ENCODE measurements at regions of chr15 and their contacts with region 1.

Region 1: DNA sequence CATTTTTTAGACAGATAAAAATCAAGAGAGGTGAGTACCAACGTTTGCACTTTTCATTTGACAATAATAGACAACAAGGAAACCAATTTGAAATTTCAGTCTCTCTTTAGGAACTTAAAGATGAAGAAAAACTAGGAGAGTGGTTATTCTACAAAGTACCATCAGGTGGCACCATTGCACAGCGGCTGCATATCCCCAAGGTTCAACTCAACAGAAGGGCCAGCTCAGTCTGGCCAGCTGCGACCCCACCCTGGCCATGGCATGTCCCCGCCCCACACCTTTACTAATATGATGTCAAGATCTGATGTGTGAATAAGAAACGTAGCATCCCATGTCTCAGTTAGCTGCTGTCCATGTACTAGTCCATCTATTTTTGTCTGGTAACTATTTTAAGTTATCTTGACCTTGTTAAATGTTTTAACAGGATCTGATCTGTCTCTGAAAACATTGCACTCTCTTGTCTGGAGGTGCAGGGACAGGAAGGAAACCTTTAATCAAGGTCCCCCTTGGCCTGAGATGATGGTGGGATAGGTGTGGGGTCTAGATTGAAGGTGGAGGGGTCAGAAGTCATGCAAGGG is 35.5 kb upstream of the CGNL1 start:
- DNase-seq: peak; percentile 18 to 50 (median 46)
- H3K4me3 ChIP-seq: no peak overlapping the region
- H3K4me3 Mint-ChIP-seq: no peak overlapping the region
- H3K27ac ChIP-seq: no peak overlapping the region
- H3K27ac Mint-ChIP-seq: no peak overlapping the region
- H3K4me1 ChIP-seq: no peaks in the 10 kb centered on the region
- H3K4me1 Mint-ChIP-seq: peaks cover 8% of the 10 kb centered on the region
- H3K27me3 ChIP-seq: no peaks in the 10 kb centered on the region
- H3K27me3 Mint-ChIP-seq: peaks cover 0 to 2% (median 0%) of the 10 kb centered on the region in 3 donors
- CTCF ChIP-seq: peak; percentile 86

Region 2: DNA sequence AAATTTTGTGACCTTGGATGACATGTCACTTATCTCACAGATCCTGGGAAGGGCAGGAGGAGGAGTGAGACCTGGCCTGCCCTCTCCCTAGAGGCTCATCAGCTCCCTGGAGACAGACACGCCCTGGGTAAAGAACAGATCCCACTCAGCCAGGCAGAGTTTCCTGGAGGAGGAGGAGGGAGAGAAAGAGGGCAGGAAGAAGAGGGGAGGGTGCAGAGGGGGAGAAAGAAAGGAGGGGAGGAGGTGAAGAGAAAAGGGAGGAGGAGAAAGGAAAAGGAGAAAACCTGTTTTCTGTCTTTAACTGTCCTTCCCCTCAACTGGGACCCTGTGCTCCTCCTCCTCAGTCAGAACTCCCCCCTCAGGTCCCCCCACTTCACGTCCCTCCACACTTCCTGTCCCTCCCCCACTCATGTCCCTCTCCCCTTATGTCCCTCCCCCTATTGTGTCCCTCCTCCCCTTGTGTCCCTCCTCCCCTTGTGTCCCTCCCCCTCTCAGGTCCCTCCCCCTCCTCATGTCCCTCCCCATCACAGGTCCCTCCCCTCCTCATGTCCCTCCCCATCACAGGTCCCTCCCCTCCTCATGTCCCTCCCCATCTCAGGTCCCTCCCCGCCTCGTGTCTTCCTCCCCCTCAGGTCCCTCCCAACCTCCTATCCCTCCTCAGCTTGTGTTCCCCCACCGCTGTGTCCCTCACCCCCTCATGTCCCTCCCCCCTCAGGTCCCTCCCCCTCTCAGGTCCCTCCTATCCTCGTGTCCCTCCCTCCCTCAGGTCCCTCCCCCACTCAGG is 16.8 kb before region 1 on chr15:
- intact Hi-C with region 1: no loop called
- DNase-seq: no peak
- H3K4me3 ChIP-seq: no peak overlapping the region
- H3K4me3 Mint-ChIP-seq: no peak overlapping the region
- H3K27ac ChIP-seq: no peak overlapping the region
- H3K27ac Mint-ChIP-seq: peak overlapping the region in 1 of 7 donors; percentile 62
- H3K4me1 ChIP-seq: peaks cover 6 to 11% of the 10 kb centered on the region in 2 donors
- H3K4me1 Mint-ChIP-seq: peaks cover 11% of the 10 kb centered on the region
- H3K27me3 ChIP-seq: no peaks in the 10 kb centered on the region
- H3K27me3 Mint-ChIP-seq: peaks cover 3 to 9% (median 8%) of the 10 kb centered on the region in 3 donors
- CTCF ChIP-seq: no peak

Region 3: DNA sequence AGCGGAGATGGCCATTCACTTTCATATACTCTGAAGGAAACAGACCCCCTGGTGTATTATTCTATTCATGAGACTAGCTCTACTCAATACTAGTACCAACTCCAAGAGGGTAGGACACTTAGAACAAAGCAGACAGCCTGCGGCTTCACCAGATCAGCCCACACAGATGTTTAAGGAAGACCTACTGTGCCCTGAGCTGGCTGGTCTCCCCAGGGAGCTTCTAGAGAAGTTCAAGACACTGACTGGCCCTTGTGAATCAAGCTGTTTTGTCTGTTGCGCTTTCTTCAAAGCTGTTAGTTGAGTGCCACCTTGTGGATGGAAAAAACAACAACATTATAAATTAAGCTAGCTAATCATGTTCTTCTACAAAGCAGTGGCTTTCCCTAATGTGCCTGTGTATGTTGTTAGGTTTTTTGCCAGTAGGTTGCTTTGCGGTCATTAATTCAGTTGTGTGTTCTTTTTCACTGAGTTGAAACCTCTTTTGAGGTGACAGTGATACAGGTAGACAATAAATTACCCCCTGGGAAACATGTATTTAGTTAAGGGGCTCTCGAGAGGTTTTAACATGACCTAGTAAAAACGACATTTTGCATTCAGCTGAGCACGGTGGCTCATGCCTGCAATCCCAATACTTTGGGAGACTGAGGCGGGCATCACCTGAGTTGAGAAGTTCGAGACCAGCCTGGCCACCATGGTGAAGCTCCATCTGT is 186.8 kb after region 1 on chr15:
- intact Hi-C with region 1: loop called (anchors 1 to 5 kb)
- DNase-seq: peak; percentile 13 to 40 (median 16)
- H3K4me3 ChIP-seq: no peak overlapping the region
- H3K4me3 Mint-ChIP-seq: no peak overlapping the region
- H3K27ac ChIP-seq: no peak overlapping the region
- H3K27ac Mint-ChIP-seq: no peak overlapping the region
- H3K4me1 ChIP-seq: no peaks in the 10 kb centered on the region
- H3K4me1 Mint-ChIP-seq: no peaks in the 10 kb centered on the region
- H3K27me3 ChIP-seq: no peaks in the 10 kb centered on the region
- H3K27me3 Mint-ChIP-seq: no peaks in the 10 kb centered on the region
- CTCF ChIP-seq: peak; percentile 64

Region 4: DNA sequence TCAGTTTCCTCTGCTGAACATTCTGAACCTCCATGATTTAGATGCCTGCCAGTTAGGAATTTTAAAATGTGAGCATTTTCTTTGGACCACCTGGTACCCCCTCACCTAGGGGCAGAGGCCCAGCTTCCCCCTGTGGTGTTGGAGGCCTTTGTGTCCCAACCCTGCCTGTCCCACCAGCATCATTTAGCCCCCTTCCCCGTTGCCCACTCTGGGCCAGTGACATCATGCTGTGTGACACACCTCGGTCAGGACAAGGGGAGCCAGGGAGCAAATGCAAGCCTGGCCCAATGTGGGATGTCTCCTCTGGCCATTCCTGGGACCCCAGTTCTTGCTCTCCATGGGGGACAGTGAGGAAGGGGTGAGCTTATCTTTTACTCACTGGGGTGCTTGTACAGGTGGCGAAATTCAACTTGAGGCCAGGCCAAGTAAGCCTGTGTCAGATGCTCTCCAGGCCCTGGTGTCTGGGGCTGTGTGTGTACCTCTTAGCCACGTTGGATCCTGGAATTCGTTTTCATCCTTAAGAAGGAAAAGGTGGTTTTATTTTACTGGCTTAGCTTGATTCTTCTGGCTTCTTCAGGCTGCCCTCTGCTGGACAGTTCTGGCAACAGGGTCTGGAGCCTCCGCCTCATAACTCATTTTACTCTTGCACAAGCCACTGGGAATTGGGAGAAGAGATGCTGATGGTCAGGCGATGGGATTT is 201.2 kb after region 1 on chr15:
- intact Hi-C with region 1: loop called in 1 of 2 experiments (anchors 5 kb)
- DNase-seq: peak; percentile 10 to 29 (median 24)
- H3K4me3 ChIP-seq: no peak overlapping the region
- H3K4me3 Mint-ChIP-seq: no peak overlapping the region
- H3K27ac ChIP-seq: no peak overlapping the region
- H3K27ac Mint-ChIP-seq: no peak overlapping the region
- H3K4me1 ChIP-seq: no peaks in the 10 kb centered on the region
- H3K4me1 Mint-ChIP-seq: no peaks in the 10 kb centered on the region
- H3K27me3 ChIP-seq: no peaks in the 10 kb centered on the region
- H3K27me3 Mint-ChIP-seq: peaks cover 0 to 3% (median 2%) of the 10 kb centered on the region in 3 donors
- CTCF ChIP-seq: peak; percentile 83

Region 5: GRCh38 chr15:57861036-57861638 is 520.4 kb after region 1 on chr15:
- intact Hi-C with region 1: loop called in 1 of 2 experiments (anchors 5 kb)
- DNase-seq: peak; percentile 15 to 42 (median 34)
- H3K4me3 ChIP-seq: no peak overlapping the region
- H3K4me3 Mint-ChIP-seq: no peak overlapping the region
- H3K27ac ChIP-seq: no peak overlapping the region
- H3K27ac Mint-ChIP-seq: no peak overlapping the region
- H3K4me1 ChIP-seq: no peaks in the 10 kb centered on the region
- H3K4me1 Mint-ChIP-seq: no peaks in the 10 kb centered on the region
- H3K27me3 ChIP-seq: peaks cover 12 to 14% of the 10 kb centered on the region in 2 donors
- H3K27me3 Mint-ChIP-seq: peaks cover 13 to 25% (median 18%) of the 10 kb centered on the region in 3 donors
- CTCF ChIP-seq: peak; percentile 90